ENCODE measurements at regions of chr17 and their contacts with region 1.

Region 1: GRCh38 chr17:20121359-20122253 is 112.4 kb downstream of the SPECC1 start:
- DNase-seq: peak; percentile 32
- H3K4me3 ChIP-seq: no peak overlapping the region
- CTCF ChIP-seq: peak; percentile 94

Region 2: GRCh38 chr17:19979917-19980770 is 141.5 kb before region 1 on chr17:
- in situ Hi-C with region 1: loop called (anchors 10 kb)
- DNase-seq: no peak
- H3K4me3 ChIP-seq: no peak overlapping the region
- CTCF ChIP-seq: no peak

Measured in astrocyte of the cerebellum (primary cell).